A549 (cell line): ENCODE measurements at regions of chr12 and their contacts with region 1.

Region 1: GRCh38 chr12:97321621-97322020 is 141.0 kb upstream of the RMST start:
- DNase-seq: no peak
- ATAC-seq: no peak
- H3K4me3 ChIP-seq: no peak overlapping the region
- H3K27ac ChIP-seq: no peak overlapping the region
- H3K4me1 ChIP-seq: no peaks in the 10 kb centered on the region
- CTCF ChIP-seq: no peak
- EP300 ChIP-seq: no peak
- POLR2A ChIP-seq: no peak
- RAD21 ChIP-seq: no peak

Region 2: GRCh38 chr12:97194551-97194950 is 127.1 kb before region 1 on chr12:
- CTCF ChIA-PET with region 1: no interaction called
- POLR2A ChIA-PET with region 1: interaction called, 11 read pairs
- DNase-seq: no peak
- ATAC-seq: no peak
- H3K4me3 ChIP-seq: no peak overlapping the region
- H3K27ac ChIP-seq: no peak overlapping the region
- H3K4me1 ChIP-seq: no peaks in the 10 kb centered on the region
- CTCF ChIP-seq: no peak
- EP300 ChIP-seq: no peak
- POLR2A ChIP-seq: no peak
- RAD21 ChIP-seq: no peak